ENCODE measurements at regions of chrX and their contacts with region 1.

Region 1: GRCh38 chrX:103214870-103215424 is at the start of gene BEX4:
- DNase-seq: peak; percentile 73
- H3K4me3 Mint-ChIP-seq: peak within 1 kb of the TSS; percentile 84
- H3K27ac Mint-ChIP-seq: peak within 1 kb of the TSS; percentile 78
- H3K4me1 Mint-ChIP-seq: peaks cover 6% of the 10 kb centered on the region
- H3K27me3 Mint-ChIP-seq: peaks cover 10% of the 10 kb centered on the region
- total RNA-seq, gene BEX4: 7.8 and 9.4 TPM in 2 replicates

Region 2: DNA sequence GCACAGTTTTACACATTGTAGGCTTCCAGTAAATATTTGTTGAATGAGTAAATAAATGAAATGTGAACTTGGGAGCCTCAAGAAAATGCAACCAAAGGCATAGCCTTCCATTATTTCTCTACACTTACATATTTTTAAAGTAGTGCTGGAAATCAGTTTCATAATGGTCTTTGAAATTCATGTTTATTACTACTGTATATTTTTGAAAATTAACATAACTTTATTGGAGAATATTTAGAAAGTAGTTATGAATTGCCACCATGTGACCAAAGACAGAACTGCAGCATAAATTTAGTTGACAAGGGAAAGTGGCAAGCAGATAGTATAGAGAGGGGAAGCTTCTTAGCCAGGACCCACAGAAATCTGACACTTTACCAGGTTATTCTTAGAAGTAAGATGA is 33.6 kb after region 1 on chrX:
- intact Hi-C with region 1: loop called (anchors 1 kb)
- DNase-seq: no peak
- H3K4me3 Mint-ChIP-seq: no peak overlapping the region
- H3K27ac Mint-ChIP-seq: no peak overlapping the region
- H3K4me1 Mint-ChIP-seq: peaks cover 3% of the 10 kb centered on the region
- H3K27me3 Mint-ChIP-seq: peaks cover 10% of the 10 kb centered on the region

Region 3: DNA sequence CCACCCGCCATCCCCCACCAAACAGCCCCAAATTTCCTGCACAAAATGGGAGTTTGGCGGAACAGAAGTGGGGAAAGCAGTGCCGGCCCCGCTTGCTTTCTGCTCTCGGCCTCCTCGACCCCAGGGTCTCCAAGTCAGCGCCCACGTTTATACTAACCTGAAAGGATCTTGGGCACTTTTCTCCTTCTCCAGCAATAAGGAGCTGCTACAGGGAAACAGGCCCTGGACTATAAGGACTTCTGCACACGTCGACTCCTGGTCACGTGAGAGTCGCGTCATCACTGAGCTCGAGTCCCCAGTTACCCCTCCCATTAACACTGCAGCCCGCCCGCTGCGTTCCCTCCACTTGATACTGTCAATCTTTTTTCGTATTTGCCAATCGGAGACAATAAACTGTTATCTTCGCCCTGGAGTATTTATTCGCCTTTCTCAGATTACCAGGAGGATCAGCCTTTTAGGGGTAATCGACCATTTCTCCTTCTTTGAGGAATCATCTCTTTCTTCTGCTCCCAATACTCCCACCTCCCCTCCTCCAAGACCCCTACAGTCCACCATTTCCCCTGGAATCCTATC is 40.1 kb after region 1 on chrX and contains the start of gene TCEAL8:
- intact Hi-C with region 1: loop called (anchors 2 kb)
- DNase-seq: peak; percentile 42
- H3K4me3 Mint-ChIP-seq: peak within 1 kb of the TSS; percentile 98
- H3K27ac Mint-ChIP-seq: peak within 1 kb of the TSS; percentile 96
- H3K4me1 Mint-ChIP-seq: peaks cover 15% of the 10 kb centered on the region
- H3K27me3 Mint-ChIP-seq: peaks cover 4% of the 10 kb centered on the region
- total RNA-seq, gene TCEAL8: 28.1 and 30.1 TPM in 2 replicates

Region 4: GRCh38 chrX:103464774-103465117 is 249.8 kb after region 1 on chrX:
- intact Hi-C with region 1: loop called (anchors 2 kb)
- DNase-seq: peak; percentile 56
- H3K4me3 Mint-ChIP-seq: peak overlapping the region; percentile 86
- H3K27ac Mint-ChIP-seq: peak overlapping the region; percentile 63
- H3K4me1 Mint-ChIP-seq: peaks cover 3% of the 10 kb centered on the region
- H3K27me3 Mint-ChIP-seq: peaks cover 6% of the 10 kb centered on the region

Measured in activated T-helper 2 cell treated with anti-CD3 and anti-CD28 coated beads, Interferon-gamma antibody, Interleukin-2, Interleukin-4, amounts not matched to agents 10 μg/mL and 5 μg/mL and 100 μg/mL, durations not matched to agents 14 hours and 24 hours and 36 hours (primary cell).